Right cardiac atrium (tissue), 5 donors: ENCODE measurements at regions of chr21 and their contacts with region 1.

Region 1: DNA sequence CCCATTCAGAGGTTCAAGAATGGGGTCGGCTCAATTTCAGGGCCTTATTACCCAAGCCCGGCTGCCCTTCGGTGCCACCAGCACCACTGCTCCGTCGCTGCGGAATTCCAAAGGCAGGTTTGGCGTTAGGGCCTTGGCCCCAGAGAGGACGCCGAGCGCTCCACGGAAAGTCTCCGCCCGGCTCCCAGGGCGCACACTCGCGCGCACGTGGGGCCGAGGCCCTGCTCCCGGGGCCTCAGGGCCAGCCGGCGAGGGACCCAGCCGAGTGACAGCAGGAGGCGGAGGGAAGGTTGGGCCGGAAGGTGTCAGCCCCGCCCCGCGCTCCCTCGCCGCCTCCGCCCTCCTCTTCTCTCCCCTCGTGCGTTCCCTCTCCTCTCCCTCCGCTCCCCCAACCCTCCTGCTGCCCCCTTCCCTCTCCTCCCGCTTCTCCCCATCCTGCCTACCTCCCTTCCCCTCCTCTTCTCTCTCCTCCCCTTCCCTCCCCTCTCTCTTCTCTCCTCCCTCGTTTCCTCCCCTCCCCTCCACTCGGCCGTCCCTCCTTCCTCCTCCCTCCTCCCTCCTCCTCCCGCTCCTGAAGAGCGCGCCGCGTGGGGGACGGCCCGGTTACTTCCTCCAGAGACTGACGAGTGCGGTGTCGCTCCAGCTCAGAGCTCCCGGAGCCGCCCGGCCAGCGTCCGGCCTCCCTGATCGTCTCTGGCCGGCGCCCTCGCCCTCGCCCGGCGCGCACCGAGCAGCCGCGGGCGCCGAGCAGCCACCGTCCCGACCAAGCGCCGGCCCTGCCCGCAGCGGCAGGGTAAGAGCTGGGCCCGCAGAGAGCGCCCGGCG is at the start of gene ETS2:
- DNase-seq: peak; percentile 93 to 96 (median 96)
- ATAC-seq: peak; percentile 93 to 94
- H3K4me3 ChIP-seq: peak within 1 kb of the TSS; percentile 89
- H3K27ac ChIP-seq: peak within 1 kb of the TSS; percentile 68
- H3K4me1 ChIP-seq: peaks cover 5% of the 10 kb centered on the region
- H3K27me3 ChIP-seq: no peaks in the 10 kb centered on the region
- total RNA-seq, gene ETS2: 40.4 to 76.3 (median 44.8) TPM

Region 2: GRCh38 chr21:38733973-38734546 is 71.5 kb before region 1 on chr21:
- intact Hi-C with region 1: loop called in 1 of 4 experiments (anchors 5 kb)
- DNase-seq: peak; percentile 88 to 97 (median 96)
- ATAC-seq: peak; percentile 90 to 95
- H3K4me3 ChIP-seq: peak overlapping the region; percentile 9
- H3K27ac ChIP-seq: peak overlapping the region; percentile 19
- H3K4me1 ChIP-seq: no peaks in the 10 kb centered on the region
- H3K27me3 ChIP-seq: no peaks in the 10 kb centered on the region

Region 3: GRCh38 chr21:38861989-38862683 is 56.6 kb after region 1 on chr21:
- intact Hi-C with region 1: loop called in 1 of 4 experiments (anchors 10 kb)
- DNase-seq: no peak
- ATAC-seq: no peak
- H3K4me3 ChIP-seq: no peak overlapping the region
- H3K27ac ChIP-seq: no peak overlapping the region
- H3K4me1 ChIP-seq: peaks cover 2% of the 10 kb centered on the region
- H3K27me3 ChIP-seq: no peaks in the 10 kb centered on the region

Region 4: GRCh38 chr21:38913120-38913892 is 107.8 kb after region 1 on chr21:
- intact Hi-C with region 1: loop called in 2 of 4 experiments (anchors 5 to 10 kb)
- DNase-seq: peak; percentile 76 to 88 (median 86)
- ATAC-seq: peak; percentile 80 to 85
- H3K4me3 ChIP-seq: no peak overlapping the region
- H3K27ac ChIP-seq: peak overlapping the region; percentile 61
- H3K4me1 ChIP-seq: peaks cover 6% of the 10 kb centered on the region
- H3K27me3 ChIP-seq: no peaks in the 10 kb centered on the region

Region 5: DNA sequence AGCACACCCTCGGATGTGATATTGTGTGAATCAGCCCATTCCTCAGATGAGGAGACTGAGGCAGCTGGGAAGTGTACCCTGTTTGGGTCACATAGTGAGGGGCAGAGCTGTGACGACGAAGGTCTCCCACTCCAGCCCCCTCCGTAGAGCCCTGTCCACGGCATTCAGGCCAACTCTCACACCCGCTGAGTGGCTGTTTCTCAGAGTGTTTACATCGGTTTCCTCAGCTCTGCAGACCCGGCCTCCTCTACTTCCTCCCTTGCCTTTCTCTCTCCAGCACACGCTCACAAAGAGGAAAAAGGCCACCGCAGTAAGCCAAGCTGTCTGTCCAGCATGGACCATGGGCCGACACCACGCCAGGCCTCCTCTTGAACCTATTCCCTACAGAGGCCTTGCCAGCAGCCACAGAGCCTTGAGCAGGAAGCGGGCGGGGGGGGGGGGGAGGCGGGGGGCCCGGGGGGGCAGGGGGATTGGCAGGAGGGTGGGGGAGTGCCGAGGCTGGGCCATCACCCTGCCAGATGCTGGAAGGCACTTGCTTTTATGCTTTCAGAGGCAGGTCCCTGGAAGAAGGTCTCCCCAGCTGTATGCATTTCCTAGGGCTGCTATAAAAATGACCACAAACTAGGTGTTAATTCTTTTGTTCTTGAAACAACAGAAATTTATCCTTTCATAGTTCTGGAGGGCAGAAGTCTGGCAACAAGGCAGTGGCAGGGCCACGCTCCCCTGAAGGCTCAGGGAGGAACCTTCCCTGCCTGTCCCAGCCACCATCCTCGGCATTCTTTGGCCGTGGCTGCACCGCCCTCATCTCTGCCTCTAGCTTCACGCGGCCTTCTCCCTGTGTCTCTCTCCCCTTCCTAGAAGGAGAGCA is 199.3 kb after region 1 on chr21:
- intact Hi-C with region 1: loop called in 2 of 4 experiments (anchors 5 to 10 kb)
- DNase-seq: peak; percentile 75 to 91 (median 89)
- ATAC-seq: peak; percentile 61 to 79
- H3K4me3 ChIP-seq: no peak overlapping the region
- H3K27ac ChIP-seq: peak overlapping the region; percentile 91
- H3K4me1 ChIP-seq: peaks cover 14% of the 10 kb centered on the region
- H3K27me3 ChIP-seq: no peaks in the 10 kb centered on the region

Region 6: DNA sequence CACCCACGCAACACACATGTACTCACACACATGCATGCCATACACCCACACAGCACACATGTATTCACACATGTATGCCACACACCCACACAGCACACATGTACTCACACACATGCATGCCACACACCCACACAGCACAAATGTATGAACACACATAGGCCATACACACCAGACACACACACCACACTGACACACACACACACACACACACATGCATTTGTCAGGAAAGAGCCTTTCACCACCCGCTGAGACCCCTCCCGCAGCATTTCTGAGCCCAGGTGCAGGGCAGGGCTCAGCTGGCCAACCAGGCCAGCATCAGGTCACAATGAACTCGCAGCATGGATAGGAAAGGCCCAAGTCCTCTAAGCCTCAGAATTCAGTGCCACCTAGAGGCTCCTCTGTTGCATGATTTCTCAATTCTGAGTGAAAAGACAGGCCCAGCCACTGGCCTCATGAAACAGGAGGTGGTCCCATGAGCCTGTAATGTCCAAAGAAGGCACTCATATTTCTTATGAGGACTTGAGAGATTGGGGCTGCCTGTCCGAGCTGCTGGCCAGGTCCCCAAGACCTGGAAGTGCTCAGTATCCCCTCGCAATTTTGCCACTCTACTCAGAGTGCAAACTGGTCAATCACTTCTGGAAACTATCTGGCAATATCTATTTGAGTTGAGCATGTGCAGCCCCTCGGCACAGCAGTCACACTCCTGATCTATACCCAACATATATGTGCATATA is 320.4 kb after region 1 on chr21:
- intact Hi-C with region 1: loop called (anchors 2 to 10 kb)
- DNase-seq: no peak
- ATAC-seq: peak; percentile 94
- H3K4me3 ChIP-seq: no peak overlapping the region
- H3K27ac ChIP-seq: no peak overlapping the region
- H3K4me1 ChIP-seq: no peaks in the 10 kb centered on the region
- H3K27me3 ChIP-seq: no peaks in the 10 kb centered on the region